Mammary epithelial cell (primary cell): ENCODE measurements at regions of chr6 and their contacts with region 1.

Region 1: DNA sequence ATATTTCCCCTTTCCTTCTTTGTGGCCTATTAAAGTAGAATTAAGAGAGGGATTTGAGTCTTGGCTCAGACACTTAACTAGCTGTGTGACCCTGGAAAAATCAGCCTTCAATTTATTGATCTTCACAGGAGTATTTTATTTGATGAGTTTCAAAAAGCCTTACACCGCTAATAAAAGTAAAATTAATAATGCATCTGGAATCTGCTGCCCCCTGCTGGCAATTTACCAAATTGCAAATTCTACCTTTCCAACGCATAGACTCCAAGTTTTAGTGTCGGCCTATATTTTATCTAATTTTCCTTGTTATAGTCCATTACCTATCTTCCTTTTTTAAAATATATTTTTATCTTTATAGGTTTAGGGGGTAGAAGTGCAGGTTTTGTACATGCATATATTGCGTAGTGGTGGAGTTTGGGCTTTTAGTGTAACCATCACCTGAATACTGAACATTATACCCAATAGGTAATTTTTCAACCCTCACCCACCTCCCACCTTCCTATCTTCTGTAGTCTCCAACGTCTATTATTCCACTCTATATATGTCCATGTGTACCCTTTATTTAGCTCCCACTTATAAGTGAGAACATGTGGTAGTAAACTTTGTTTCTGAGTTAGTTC is 46.3 kb downstream of the GOPC start:
- DNase-seq: peak; percentile 32
- H3K4me3 ChIP-seq: no peak overlapping the region
- H3K27ac ChIP-seq: no peak overlapping the region
- H3K4me1 ChIP-seq: peaks cover 18% of the 10 kb centered on the region
- H3K27me3 ChIP-seq: no peaks in the 10 kb centered on the region
- CTCF ChIP-seq: peak; percentile 73 to 84

Region 2: GRCh38 chr6:117346142-117346930 is 209.7 kb before region 1 on chr6:
- CTCF ChIA-PET with region 1: no interaction called
- dilution Hi-C with region 1: no loop called
- in situ Hi-C with region 1: loop called in 1 of 2 experiments (anchors 5 kb)
- intact Hi-C with region 1: loop called (anchors 1 kb)
- DNase-seq: peak; percentile 9
- H3K4me3 ChIP-seq: no peak overlapping the region
- H3K27ac ChIP-seq: no peak overlapping the region
- H3K4me1 ChIP-seq: no peaks in the 10 kb centered on the region
- H3K27me3 ChIP-seq: no peaks in the 10 kb centered on the region
- CTCF ChIP-seq: peak; percentile 42 to 45

Region 3: GRCh38 chr6:117404548-117404947 is 151.4 kb before region 1 on chr6:
- CTCF ChIA-PET with region 1: interaction called, 3 read pairs
- dilution Hi-C with region 1: no loop called
- in situ Hi-C with region 1: no loop called
- intact Hi-C with region 1: loop called (anchors 2 kb)
- DNase-seq: peak; percentile 26
- H3K4me3 ChIP-seq: no peak overlapping the region
- H3K27ac ChIP-seq: no peak overlapping the region
- H3K4me1 ChIP-seq: no peaks in the 10 kb centered on the region
- H3K27me3 ChIP-seq: no peaks in the 10 kb centered on the region
- CTCF ChIP-seq: peak; percentile 29 to 54

Region 4: DNA sequence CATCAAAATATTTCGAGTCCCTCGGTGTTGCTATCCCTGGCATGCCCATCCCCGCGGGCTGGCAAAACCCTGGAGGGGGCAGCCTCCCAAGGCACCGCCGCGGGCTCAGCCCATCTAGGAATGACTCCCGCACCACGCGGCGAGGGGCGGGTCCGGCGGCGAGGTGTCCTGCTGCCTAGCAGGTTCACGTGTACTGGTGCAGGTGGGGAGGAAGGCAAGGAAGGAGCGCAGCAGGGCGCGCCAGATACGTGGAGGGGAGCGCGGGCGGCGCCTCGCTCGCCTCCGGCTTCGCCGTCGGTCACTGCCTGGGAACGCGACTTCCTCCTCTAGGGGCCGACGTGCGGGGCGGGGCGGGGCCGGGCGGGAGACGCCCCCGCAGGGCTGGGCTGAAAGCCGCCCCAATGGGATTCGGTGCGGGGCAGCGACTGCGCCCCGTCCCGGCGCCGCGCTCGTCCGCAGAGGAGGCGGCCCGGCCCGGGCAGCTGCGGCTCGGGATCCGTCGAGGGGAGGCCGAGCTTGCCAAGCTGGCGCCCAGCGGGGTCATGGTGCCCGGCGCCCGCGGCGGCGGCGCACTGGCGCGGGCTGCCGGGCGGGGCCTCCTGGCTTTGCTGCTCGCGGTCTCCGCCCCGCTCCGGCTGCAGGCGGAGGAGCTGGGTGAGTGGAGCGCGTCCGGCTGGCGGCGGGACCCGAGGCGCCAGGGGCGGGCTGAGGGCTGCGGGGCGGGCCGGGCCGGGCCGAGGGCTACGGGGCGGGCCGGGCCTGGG is 73.6 kb before region 1 on chr6 and contains the start of gene DCBLD1:
- CTCF ChIA-PET with region 1: no interaction called
- dilution Hi-C with region 1: no loop called
- in situ Hi-C with region 1: no loop called
- intact Hi-C with region 1: loop called (anchors 1 kb)
- DNase-seq: peak; percentile 86
- H3K4me3 ChIP-seq: peak within 1 kb of the TSS; percentile 81 to 91 (median 83)
- H3K27ac ChIP-seq: peak within 1 kb of the TSS; percentile 79
- H3K4me1 ChIP-seq: peaks cover 27% of the 10 kb centered on the region
- H3K27me3 ChIP-seq: no peaks in the 10 kb centered on the region
- CTCF ChIP-seq: no peak
- total RNA-seq, gene DCBLD1: 34.6 to 84.0 TPM

Region 5: DNA sequence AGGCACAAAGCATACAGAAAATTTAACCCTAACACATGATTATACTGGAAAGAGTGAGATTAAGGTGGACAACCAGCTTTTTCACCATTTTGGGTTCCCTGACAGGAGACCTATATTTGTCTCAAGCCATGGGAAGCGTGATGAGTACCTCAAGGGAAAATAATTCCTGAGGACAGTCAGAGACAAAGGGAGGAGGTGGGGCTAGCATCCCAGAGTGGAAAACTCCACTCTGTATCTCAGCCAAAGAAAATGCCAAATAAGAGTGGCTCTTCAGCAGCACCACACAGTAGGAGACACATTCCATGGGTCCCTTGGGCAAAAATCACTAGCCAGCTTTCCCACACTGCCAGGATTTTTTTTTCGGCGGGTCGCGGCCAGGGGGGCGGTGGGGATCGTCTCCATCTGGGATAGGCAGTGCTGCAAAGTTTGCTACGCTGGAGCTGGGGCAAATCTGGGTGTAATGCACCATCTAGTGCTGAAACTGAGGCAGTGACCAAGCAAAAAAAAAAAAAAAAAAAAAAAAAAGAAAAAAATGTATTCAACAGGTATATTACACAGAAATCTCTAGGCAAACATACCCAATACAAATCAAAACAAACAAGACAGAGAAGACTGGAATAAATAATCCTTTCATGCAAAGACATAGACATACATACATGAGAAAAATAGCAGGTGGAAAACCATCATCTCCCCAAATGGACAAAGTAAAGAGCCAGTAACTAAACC is 273.8 kb after region 1 on chr6:
- CTCF ChIA-PET with region 1: no interaction called
- dilution Hi-C with region 1: no loop called
- in situ Hi-C with region 1: no loop called
- intact Hi-C with region 1: loop called (anchors 5 kb)
- DNase-seq: peak; percentile 33
- H3K4me3 ChIP-seq: peak overlapping the region; percentile 42 to 55 (median 48)
- H3K27ac ChIP-seq: no peak overlapping the region
- H3K4me1 ChIP-seq: no peaks in the 10 kb centered on the region
- H3K27me3 ChIP-seq: no peaks in the 10 kb centered on the region
- CTCF ChIP-seq: peak; percentile 27 to 69